B cell (primary cell): ENCODE measurements at regions of chrX and their contacts with region 1.

Region 1: GRCh38 chrX:55717521-55718497 is at the start of gene RRAGB:
- DNase-seq: peak; percentile 94
- ATAC-seq: peak; percentile 95
- H3K4me3 ChIP-seq: peak within 1 kb of the TSS; percentile 66 to 74 (median 70)
- H3K4me3 Mint-ChIP-seq: peak within 1 kb of the TSS; percentile 91
- H3K27ac ChIP-seq: peak within 1 kb of the TSS; percentile 90 to 94
- H3K27ac Mint-ChIP-seq: peak within 1 kb of the TSS; percentile 93
- H3K4me1 ChIP-seq: peaks cover 9 to 15% of the 10 kb centered on the region in 2 donors
- H3K4me1 Mint-ChIP-seq: peaks cover 29% of the 10 kb centered on the region
- H3K27me3 ChIP-seq: no peaks in the 10 kb centered on the region
- H3K27me3 Mint-ChIP-seq: no peaks in the 10 kb centered on the region
- CTCF ChIP-seq: peak; percentile 72
- total RNA-seq, gene RRAGB: 21.3 and 22.3 TPM in 2 replicates

Region 2: DNA sequence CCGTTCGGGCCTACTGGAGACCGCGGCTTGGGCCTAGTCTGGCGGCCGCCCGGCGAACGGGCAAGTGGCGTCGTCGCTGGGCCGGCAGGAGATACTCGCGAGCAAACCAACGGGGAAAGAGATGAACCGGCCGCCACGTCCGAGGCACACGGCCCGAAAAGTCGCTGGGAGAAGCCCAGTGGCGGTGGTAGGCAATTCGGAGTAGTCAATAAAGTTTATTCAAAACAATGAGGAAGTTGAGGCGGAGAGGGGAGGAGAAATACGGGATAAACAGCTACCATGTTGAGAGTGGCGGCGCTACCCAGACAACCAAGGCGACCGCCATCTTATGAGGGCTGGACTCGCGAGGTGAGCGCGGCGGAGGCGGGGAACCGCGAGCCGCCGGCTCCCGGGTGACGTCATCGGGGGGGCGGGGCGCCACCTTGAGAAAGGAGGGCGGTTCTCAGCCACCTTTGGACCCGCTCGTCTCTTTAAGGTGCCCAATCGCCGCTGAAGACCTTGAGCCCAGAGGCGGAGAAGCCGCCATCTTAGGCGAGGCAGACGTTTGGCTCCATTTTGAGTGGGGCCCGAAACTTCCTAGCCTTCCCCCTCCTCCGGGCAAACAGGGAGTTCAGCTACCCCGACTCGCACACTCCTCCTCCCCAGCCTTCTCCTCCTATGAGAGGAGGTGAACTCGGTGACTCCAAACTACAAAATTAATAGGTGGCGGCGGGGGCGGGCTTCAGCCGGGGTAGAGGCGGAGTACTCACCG is 1673.5 kb before region 1 on chrX and contains the start of gene PHF8:
- CTCF ChIA-PET with region 1: no interaction called
- POLR2A ChIA-PET with region 1: interaction called, 3 read pairs
- intact Hi-C with region 1: loop called (anchors 5 kb)
- DNase-seq: peak; percentile 96
- ATAC-seq: peak; percentile 80
- H3K4me3 ChIP-seq: peak within 1 kb of the TSS; percentile 68 to 86 (median 75)
- H3K4me3 Mint-ChIP-seq: peak within 1 kb of the TSS; percentile 97
- H3K27ac ChIP-seq: peak within 1 kb of the TSS; percentile 84 to 87
- H3K27ac Mint-ChIP-seq: peak within 1 kb of the TSS; percentile 95
- H3K4me1 ChIP-seq: peaks cover 9 to 13% of the 10 kb centered on the region in 2 donors
- H3K4me1 Mint-ChIP-seq: peaks cover 17% of the 10 kb centered on the region
- H3K27me3 ChIP-seq: no peaks in the 10 kb centered on the region
- H3K27me3 Mint-ChIP-seq: no peaks in the 10 kb centered on the region
- CTCF ChIP-seq: no peak
- total RNA-seq, gene PHF8: 73.2 and 79.3 TPM in 2 replicates

Region 3: GRCh38 chrX:55488593-55489313 is 229.1 kb before region 1 on chrX:
- CTCF ChIA-PET with region 1: interaction called, 17 read pairs
- POLR2A ChIA-PET with region 1: interaction called, 9 read pairs
- intact Hi-C with region 1: no loop called
- DNase-seq: peak; percentile 83
- ATAC-seq: peak; percentile 73
- H3K4me3 ChIP-seq: peak overlapping the region; percentile 73 to 94 (median 77)
- H3K4me3 Mint-ChIP-seq: peak overlapping the region; percentile 97
- H3K27ac ChIP-seq: peak overlapping the region; percentile 88 to 92
- H3K27ac Mint-ChIP-seq: peak overlapping the region; percentile 98
- H3K4me1 ChIP-seq: peaks cover 3 to 11% of the 10 kb centered on the region in 2 donors
- H3K4me1 Mint-ChIP-seq: peaks cover 15% of the 10 kb centered on the region
- H3K27me3 ChIP-seq: no peaks in the 10 kb centered on the region
- H3K27me3 Mint-ChIP-seq: no peaks in the 10 kb centered on the region
- CTCF ChIP-seq: no peak

Region 4: GRCh38 chrX:55738969-55739368 is 21.2 kb after region 1 on chrX:
- CTCF ChIA-PET with region 1: no interaction called
- POLR2A ChIA-PET with region 1: no interaction called
- intact Hi-C with region 1: no loop called
- DNase-seq: no peak
- ATAC-seq: no peak
- H3K4me3 ChIP-seq: no peak overlapping the region
- H3K4me3 Mint-ChIP-seq: no peak overlapping the region
- H3K27ac ChIP-seq: no peak overlapping the region
- H3K27ac Mint-ChIP-seq: no peak overlapping the region
- H3K4me1 ChIP-seq: no peaks in the 10 kb centered on the region
- H3K4me1 Mint-ChIP-seq: no peaks in the 10 kb centered on the region
- H3K27me3 ChIP-seq: no peaks in the 10 kb centered on the region
- H3K27me3 Mint-ChIP-seq: no peaks in the 10 kb centered on the region
- CTCF ChIP-seq: no peak

Region 5: GRCh38 chrX:55907968-55908607 is 190.3 kb after region 1 on chrX:
- CTCF ChIA-PET with region 1: interaction called, 7 read pairs
- POLR2A ChIA-PET with region 1: no interaction called
- intact Hi-C with region 1: loop called (anchors 1 kb)
- DNase-seq: peak; percentile 65
- ATAC-seq: peak; percentile 77
- H3K4me3 ChIP-seq: peak overlapping the region; percentile 65 to 71 (median 68)
- H3K4me3 Mint-ChIP-seq: peak overlapping the region; percentile 98
- H3K27ac ChIP-seq: peak overlapping the region; percentile 57 to 61
- H3K27ac Mint-ChIP-seq: peak overlapping the region; percentile 96
- H3K4me1 ChIP-seq: peaks cover 13 to 18% of the 10 kb centered on the region in 2 donors
- H3K4me1 Mint-ChIP-seq: peaks cover 32% of the 10 kb centered on the region
- H3K27me3 ChIP-seq: no peaks in the 10 kb centered on the region
- H3K27me3 Mint-ChIP-seq: no peaks in the 10 kb centered on the region
- CTCF ChIP-seq: peak; percentile 57

Region 6: DNA sequence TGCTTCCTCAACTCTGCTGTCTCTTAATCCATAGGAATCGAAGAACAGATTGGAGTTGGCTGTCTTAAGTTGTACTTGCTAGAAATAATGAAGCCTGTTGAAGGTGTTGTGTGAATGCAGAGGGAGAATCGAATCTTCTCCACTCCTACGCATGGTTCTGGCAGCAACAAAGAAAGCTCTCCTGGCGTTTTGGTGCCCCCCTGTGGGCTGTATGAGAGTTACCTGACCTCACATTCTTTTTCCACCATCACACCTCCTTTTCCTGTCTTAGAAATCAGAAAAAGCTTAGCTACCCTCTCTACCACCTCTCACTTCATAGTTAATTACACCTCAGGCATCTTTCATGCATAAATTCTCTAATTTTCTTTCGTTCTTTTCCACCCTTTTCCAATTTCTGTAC is 530.7 kb after region 1 on chrX:
- CTCF ChIA-PET with region 1: interaction called, 14 read pairs
- POLR2A ChIA-PET with region 1: interaction called, 6 read pairs
- intact Hi-C with region 1: loop called (anchors 2 kb)
- DNase-seq: peak; percentile 69
- ATAC-seq: peak; percentile 72
- H3K4me3 ChIP-seq: no peak overlapping the region
- H3K4me3 Mint-ChIP-seq: no peak overlapping the region
- H3K27ac ChIP-seq: no peak overlapping the region
- H3K27ac Mint-ChIP-seq: no peak overlapping the region
- H3K4me1 ChIP-seq: peaks cover 0 to 9% of the 10 kb centered on the region in 2 donors
- H3K4me1 Mint-ChIP-seq: peaks cover 22% of the 10 kb centered on the region
- H3K27me3 ChIP-seq: no peaks in the 10 kb centered on the region
- H3K27me3 Mint-ChIP-seq: no peaks in the 10 kb centered on the region
- CTCF ChIP-seq: peak; percentile 69

Region 7: DNA sequence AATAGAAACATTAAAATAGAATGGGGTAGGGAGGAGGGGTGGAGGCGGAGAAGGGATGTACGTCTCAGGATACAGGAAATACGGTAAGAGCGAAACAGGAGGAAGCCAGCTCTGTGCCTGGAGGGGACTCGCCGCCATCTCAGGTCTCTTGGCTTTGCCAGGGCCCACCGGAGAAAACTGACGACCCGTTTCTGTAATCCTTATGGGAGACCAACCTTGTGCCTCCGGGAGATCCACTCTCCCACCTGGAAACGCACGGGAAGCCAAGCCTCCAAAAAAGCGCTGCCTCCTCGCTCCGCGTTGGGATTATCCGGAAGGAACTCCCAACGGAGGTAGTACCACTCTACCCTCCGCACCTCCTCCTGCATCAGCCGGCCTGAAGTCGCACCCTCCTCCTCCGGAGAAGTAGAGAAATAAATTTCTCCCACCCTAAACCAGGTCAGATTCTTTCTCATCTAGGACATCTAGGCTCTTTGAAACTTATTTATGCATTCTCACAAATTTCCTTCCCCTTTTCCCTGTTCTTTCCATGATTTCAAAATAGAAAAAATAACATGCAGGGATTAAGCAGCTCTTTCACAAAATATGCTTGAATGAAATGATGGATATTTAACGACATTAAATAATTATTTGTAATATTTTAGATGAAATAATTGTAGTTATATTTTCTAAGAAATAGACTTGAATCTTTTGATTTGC is 1011.5 kb after region 1 on chrX and contains the start of gene NBDY:
- CTCF ChIA-PET with region 1: interaction called, 10 read pairs
- POLR2A ChIA-PET with region 1: no interaction called
- intact Hi-C with region 1: loop called (anchors 1 kb)
- DNase-seq: peak; percentile 53
- ATAC-seq: peak; percentile 76
- H3K4me3 ChIP-seq: peak within 1 kb of the TSS; percentile 67 to 78 (median 71)
- H3K4me3 Mint-ChIP-seq: peak within 1 kb of the TSS; percentile 96
- H3K27ac ChIP-seq: peak within 1 kb of the TSS; percentile 78 to 86
- H3K27ac Mint-ChIP-seq: peak within 1 kb of the TSS; percentile 90
- H3K4me1 ChIP-seq: peaks cover 5 to 11% of the 10 kb centered on the region in 2 donors
- H3K4me1 Mint-ChIP-seq: peaks cover 28% of the 10 kb centered on the region
- H3K27me3 ChIP-seq: no peaks in the 10 kb centered on the region
- H3K27me3 Mint-ChIP-seq: no peaks in the 10 kb centered on the region
- CTCF ChIP-seq: no peak
- total RNA-seq, gene NBDY: 31.8 and 36.5 TPM in 2 replicates